SK-N-SH (cell line): ENCODE measurements at regions of chr7 and their contacts with region 1.

Region 1: DNA sequence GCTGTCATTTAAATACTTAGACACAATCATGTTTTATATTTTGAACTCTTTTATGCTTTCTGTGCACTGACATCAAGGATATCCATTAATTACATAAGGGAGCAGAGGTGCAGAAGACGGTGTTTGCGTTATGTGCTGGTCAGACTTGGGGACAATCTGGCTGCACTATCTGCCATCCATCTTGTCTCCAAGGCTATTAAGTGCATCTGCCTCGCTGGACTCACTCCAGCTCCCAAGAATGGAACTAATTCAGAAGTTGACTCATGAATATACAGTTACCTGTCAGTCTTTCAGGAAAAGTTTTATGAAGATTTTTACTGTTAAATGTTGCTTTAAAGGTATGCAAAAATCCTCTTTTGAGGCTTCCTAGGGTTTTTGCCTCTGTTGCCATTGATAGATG is 391.0 kb downstream of the SUGCT start:
- DNase-seq: peak; percentile 46
- H3K4me3 ChIP-seq: no peak overlapping the region
- H3K27ac ChIP-seq: peak overlapping the region; percentile 91 to 100
- H3K4me1 ChIP-seq: peaks cover 36 to 44% of the 10 kb centered on the region in 2 experiments
- H3K27me3 ChIP-seq: no peaks in the 10 kb centered on the region
- CTCF ChIP-seq: no peak
- EP300 ChIP-seq: peak; percentile 96 to 100
- RAD21 ChIP-seq: peak; percentile 25; the same call in 1 of the 2 replicates

Region 2: DNA sequence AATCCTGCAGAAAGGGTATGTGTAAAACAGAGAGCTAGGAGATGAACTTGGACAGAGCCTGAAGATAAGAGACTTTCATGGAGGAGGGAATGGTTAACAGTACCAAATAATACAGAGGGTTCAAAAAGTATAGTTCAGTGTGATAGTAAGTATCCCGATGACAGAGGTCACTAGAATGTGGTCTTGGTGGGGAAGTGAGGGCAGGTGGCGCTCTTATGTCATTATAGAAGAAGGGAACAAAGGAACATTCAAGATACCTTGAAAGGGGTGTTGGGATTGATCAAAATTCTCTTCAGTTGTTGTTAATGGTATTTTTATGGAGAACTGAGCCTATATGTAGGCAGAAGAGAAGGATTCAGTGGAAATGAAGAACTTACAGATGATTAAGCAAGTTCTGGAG is 78.4 kb before region 1 on chr7:
- CTCF ChIA-PET with region 1: no interaction called
- POLR2A ChIA-PET with region 1: no interaction called
- DNase-seq: no peak
- H3K4me3 ChIP-seq: no peak overlapping the region
- H3K27ac ChIP-seq: no peak overlapping the region
- H3K4me1 ChIP-seq: no peaks in the 10 kb centered on the region
- H3K27me3 ChIP-seq: no peaks in the 10 kb centered on the region
- CTCF ChIP-seq: peak; percentile 13; the same call in 1 of the 2 replicates
- EP300 ChIP-seq: no peak
- RAD21 ChIP-seq: peak; percentile 57

Region 3: GRCh38 chr7:40507166-40507565 is 18.6 kb before region 1 on chr7:
- CTCF ChIA-PET with region 1: interaction called, 12 read pairs
- POLR2A ChIA-PET with region 1: no interaction called
- DNase-seq: no peak
- H3K4me3 ChIP-seq: no peak overlapping the region; a peak in 1 of 4 replicates
- H3K27ac ChIP-seq: no peak overlapping the region
- H3K4me1 ChIP-seq: no peaks in the 10 kb centered on the region; a peak in 1 of 4 replicates
- H3K27me3 ChIP-seq: no peaks in the 10 kb centered on the region
- CTCF ChIP-seq: peak; percentile 40
- EP300 ChIP-seq: no peak
- RAD21 ChIP-seq: 0 out of 2 replicates have a peak, but pooled peaks have one; percentile 3